Activated CD4-positive, alpha-beta T cell treated with anti-CD3 and anti-CD28 coated beads, Interleukin-2, amount 10 ng/mL, durations not matched to agents 24 days and 14 days (primary cell): ENCODE measurements at regions of chr14 and their contacts with region 1.

Region 1: DNA sequence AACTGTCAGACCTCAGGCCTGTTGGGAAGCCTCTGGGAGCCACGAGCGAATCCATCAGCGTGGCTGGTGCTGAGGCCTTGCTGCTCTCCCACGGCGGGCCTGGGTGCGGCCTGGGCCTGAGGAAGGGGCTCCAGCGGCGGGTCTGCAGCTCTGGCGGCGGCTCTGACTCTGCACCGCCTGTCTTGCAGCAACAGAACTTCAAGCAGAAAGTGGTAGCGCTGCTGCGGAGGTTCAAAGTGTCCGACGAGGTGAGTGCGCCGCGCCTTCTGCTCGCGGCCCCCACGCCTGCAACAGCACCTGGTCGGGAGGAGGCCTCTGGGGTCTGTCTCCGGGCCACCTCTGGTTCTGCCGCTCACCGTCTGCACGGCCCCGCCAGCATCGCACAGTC is 28.7 kb upstream of the TEX22 start:
- DNase-seq: no peak
- H3K4me3 Mint-ChIP-seq: no peak overlapping the region
- H3K27ac Mint-ChIP-seq: no peak overlapping the region
- H3K4me1 Mint-ChIP-seq: peaks cover 4% of the 10 kb centered on the region
- H3K27me3 Mint-ChIP-seq: no peaks in the 10 kb centered on the region

Region 2: DNA sequence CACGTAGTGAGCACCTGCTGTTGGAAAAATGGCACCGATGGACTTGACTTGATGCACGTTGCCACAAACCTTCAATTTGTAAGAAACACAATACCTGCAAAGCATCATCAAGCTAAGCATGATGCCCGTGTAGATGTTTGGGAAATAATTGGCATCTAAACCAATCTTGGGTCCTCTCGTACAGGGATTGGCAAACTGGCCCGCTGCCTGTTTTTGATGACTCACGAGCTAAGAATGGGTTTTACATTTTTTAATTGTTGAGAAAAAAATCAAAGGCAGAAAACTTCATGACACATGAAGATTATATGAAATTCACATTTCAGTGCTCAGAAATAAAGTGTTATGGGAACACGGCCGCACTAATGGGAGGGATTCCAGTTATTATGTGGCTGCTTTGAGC is 60.9 kb after region 1 on chr14:
- intact Hi-C with region 1: no loop called
- DNase-seq: no peak
- H3K4me3 Mint-ChIP-seq: no peak overlapping the region
- H3K27ac Mint-ChIP-seq: no peak overlapping the region
- H3K4me1 Mint-ChIP-seq: peaks cover 8% of the 10 kb centered on the region
- H3K27me3 Mint-ChIP-seq: no peaks in the 10 kb centered on the region

Region 3: GRCh38 chr14:105480952-105481801 is 111.5 kb after region 1 on chr14:
- intact Hi-C with region 1: loop called (anchors 2 kb)
- DNase-seq: peak; percentile 97
- H3K4me3 Mint-ChIP-seq: peak overlapping the region; percentile 78
- H3K27ac Mint-ChIP-seq: peak overlapping the region; percentile 99
- H3K4me1 Mint-ChIP-seq: peaks cover 37% of the 10 kb centered on the region
- H3K27me3 Mint-ChIP-seq: peaks cover 22% of the 10 kb centered on the region

Region 4: DNA sequence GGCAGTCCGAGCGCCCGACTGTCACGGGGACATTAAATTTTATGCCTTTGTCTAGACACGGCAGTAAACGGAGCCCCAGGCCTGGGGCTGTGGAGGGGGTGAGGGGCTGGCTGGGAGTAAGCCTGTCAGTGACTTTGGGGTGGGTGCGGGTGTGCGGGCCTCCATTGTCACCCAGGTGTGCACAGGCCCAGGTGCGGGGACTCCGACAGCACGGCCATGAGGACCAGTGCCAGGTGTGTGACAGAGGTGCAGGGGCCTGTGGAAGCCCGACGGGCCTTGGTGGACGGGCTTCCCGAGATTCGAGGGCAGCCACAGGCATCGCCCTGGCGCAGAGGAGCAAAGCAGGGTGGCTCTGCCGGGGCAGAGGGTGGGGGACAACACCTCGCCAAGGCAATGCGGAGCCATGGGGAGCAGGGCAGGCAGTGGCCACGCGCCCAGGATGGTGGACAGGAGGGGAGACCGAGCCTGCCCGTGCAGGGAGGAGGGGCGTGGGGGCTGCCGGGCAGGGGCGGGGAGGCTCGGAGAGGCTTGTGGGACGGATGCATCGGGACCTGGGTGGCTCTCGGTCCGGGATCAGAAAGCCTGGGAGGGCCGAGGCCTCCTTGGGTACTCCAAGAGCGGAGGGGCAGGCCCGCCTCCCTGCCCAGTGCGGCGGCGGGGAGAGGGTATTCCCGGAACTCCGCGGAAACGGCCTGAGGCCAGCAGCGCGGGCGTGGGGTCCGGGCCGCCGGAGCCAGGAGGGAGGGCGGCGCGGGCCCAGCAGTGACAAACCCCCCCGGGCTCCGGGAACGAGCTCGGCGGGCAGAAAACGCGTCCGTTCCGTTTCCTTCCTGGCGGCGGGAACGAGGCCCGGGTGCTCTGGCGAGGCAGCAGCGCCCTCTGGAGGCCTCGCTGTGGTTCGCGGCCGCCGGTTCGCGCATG is 158.3 kb after region 1 on chr14:
- intact Hi-C with region 1: loop called (anchors 2 kb)
- DNase-seq: peak; percentile 96
- H3K4me3 Mint-ChIP-seq: peak overlapping the region; percentile 84
- H3K27ac Mint-ChIP-seq: peak overlapping the region; percentile 77
- H3K4me1 Mint-ChIP-seq: peaks cover 12% of the 10 kb centered on the region
- H3K27me3 Mint-ChIP-seq: peaks cover 26% of the 10 kb centered on the region